ENCODE measurements at regions of chr4 and their contacts with region 1.

Region 1: DNA sequence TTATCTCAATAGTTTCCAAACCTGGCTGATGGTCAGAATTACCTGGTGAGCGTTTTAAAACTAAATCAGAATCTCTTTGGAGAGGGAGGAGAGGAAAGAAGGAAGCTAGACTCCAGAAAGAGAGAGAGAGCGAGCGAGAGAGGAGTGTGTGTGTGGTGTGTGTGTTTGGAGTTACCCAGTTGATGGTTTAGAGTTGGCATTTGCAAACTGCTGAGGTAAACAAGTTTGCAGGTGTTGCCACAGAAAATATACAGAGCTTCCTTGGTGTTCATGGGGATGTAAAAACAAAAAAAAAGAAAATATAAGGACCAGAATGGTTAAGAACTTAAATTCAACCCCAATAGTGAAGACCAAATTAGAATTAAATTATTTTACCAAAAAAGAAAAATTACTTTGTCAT is 26.4 kb upstream of the LAP3 start:
- DNase-seq: no peak

Region 2: GRCh38 chr4:17576932-17577665 is 26.6 kb after region 1 on chr4 and contains the start of gene LAP3:
- intact Hi-C with region 1: loop called (anchors 2 kb)
- DNase-seq: peak; percentile 97 to 100 (median 99)

Region 3: GRCh38 chr4:17636696-17637622 is 86.4 kb after region 1 on chr4:
- intact Hi-C with region 1: loop called (anchors 1 kb)
- DNase-seq: peak; percentile 58 to 97 (median 86)

Region 4: DNA sequence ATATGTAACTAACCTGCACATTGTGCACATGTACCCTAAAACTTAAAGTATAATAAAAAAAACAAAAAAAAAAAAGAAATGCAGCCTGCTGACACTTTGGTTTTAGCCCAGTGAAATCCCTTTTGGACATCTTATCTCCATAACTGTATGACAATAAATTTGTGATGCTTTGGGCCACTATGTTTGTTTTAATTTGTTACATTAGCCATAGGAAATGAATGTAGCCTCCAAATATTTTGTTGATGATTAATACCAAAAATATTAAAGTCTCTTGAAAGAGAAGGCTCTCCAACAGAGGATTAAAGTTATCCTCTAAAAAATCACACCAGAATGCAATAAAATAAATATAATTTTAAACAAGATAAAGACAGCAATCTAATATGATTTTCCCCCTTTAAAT is 1848.5 kb after region 1 on chr4:
- intact Hi-C with region 1: no loop called
- DNase-seq: no peak

Measured in posterior cingulate gyrus (tissue), 11 donors.